ENCODE measurements at regions of chr18 and their contacts with region 1.

Region 1: GRCh38 chr18:23828426-23828825 is 139.2 kb downstream of the LAMA3 start:
- DNase-seq: peak; percentile 84
- H3K4me3 Mint-ChIP-seq: peak overlapping the region; percentile 48
- H3K27ac Mint-ChIP-seq: peak overlapping the region; percentile 90
- H3K4me1 Mint-ChIP-seq: peaks cover 45% of the 10 kb centered on the region
- H3K27me3 Mint-ChIP-seq: no peaks in the 10 kb centered on the region
- CTCF ChIP-seq: no peak

Region 2: DNA sequence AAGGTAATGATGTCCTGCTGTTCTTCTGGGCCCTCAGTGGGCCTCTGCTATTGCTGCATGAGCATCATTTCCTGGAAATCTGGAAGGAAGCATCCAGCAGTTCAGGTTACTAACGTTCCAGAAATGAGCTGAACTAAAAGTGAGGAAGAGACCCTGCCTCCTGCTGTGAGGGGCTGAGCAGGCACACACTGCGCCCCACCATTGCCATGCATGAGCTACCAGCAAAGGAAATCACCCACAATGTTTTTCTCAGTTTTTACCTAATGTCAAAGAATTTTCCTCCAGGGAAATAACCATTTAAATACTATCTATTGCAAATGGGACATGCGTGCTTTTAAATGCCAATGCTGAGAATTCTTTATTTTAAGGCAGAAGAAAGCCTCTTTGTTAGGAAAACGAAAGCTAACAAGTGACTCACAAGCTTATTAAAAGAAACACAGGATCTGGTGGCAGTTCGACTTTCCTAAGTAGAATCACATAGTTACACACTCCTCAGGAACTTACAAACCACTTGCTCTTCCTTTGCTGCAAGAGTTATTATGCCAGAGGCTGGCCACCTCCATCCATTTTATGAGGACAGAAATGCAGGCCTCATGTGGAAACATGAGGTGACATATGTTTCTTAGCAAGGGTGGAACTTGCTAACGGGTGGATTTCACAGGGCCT is 33.5 kb after region 1 on chr18:
- CTCF ChIA-PET with region 1: interaction called, 3 read pairs
- POLR2A ChIA-PET with region 1: interaction called, 18 read pairs
- intact Hi-C with region 1: no loop called
- DNase-seq: no peak
- H3K4me3 Mint-ChIP-seq: no peak overlapping the region
- H3K27ac Mint-ChIP-seq: no peak overlapping the region
- H3K4me1 Mint-ChIP-seq: peaks cover 24% of the 10 kb centered on the region
- H3K27me3 Mint-ChIP-seq: no peaks in the 10 kb centered on the region
- CTCF ChIP-seq: no peak

Region 3: DNA sequence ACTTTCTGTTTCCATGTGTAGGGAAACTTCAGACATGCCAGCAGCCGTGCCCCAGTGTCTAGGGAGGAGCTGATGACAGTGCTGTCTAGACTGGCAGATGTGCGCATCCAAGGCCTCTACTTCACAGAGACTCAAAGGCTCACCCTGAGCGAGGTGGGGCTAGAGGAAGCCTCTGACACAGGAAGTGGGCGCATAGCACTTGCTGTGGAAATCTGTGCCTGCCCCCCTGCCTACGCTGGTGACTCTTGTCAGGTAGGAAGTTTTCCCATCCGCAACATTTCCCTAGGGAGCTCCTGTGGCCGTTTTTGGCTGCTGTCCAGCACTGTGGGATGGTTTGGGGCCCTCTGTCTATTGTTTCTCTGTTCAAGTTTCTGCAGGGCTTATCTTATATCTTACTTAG is 43.0 kb after region 1 on chr18:
- CTCF ChIA-PET with region 1: interaction called, 4 read pairs
- POLR2A ChIA-PET with region 1: interaction called, 170 read pairs
- intact Hi-C with region 1: loop called (anchors 2 kb)
- DNase-seq: peak; percentile 82
- H3K4me3 Mint-ChIP-seq: peak overlapping the region; percentile 90
- H3K27ac Mint-ChIP-seq: peak overlapping the region; percentile 98
- H3K4me1 Mint-ChIP-seq: peaks cover 33% of the 10 kb centered on the region
- H3K27me3 Mint-ChIP-seq: no peaks in the 10 kb centered on the region
- CTCF ChIP-seq: no peak

Region 4: DNA sequence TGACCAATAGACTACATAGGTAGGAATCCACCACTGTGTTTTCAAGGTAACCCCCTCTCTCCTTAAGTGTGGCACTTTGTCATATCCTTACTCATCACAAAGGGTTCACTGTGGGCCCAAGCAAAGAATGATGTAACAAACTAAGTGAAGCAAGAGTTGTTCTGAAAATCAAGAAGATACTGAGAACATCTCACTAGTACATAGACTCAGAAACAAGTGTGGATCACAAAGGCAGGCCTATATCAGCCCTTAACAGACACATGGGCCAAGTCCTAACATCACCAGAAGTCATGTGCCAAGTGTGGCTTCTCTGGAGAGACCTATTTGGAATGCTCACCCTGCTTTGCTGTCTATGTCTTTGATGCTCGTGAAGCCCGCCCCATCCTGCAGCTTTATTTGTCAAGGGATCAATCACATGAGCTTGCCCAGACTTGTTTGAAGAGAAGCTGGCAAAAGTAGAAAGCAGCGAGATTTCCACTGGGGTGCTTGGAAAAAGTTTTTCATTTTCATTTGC is 54.9 kb after region 1 on chr18:
- CTCF ChIA-PET with region 1: interaction called, 6 read pairs
- POLR2A ChIA-PET with region 1: interaction called, 110 read pairs
- intact Hi-C with region 1: no loop called
- DNase-seq: peak; percentile 80
- H3K4me3 Mint-ChIP-seq: peak overlapping the region; percentile 34
- H3K27ac Mint-ChIP-seq: peak overlapping the region; percentile 86
- H3K4me1 Mint-ChIP-seq: peaks cover 60% of the 10 kb centered on the region
- H3K27me3 Mint-ChIP-seq: no peaks in the 10 kb centered on the region
- CTCF ChIP-seq: no peak

Region 5: DNA sequence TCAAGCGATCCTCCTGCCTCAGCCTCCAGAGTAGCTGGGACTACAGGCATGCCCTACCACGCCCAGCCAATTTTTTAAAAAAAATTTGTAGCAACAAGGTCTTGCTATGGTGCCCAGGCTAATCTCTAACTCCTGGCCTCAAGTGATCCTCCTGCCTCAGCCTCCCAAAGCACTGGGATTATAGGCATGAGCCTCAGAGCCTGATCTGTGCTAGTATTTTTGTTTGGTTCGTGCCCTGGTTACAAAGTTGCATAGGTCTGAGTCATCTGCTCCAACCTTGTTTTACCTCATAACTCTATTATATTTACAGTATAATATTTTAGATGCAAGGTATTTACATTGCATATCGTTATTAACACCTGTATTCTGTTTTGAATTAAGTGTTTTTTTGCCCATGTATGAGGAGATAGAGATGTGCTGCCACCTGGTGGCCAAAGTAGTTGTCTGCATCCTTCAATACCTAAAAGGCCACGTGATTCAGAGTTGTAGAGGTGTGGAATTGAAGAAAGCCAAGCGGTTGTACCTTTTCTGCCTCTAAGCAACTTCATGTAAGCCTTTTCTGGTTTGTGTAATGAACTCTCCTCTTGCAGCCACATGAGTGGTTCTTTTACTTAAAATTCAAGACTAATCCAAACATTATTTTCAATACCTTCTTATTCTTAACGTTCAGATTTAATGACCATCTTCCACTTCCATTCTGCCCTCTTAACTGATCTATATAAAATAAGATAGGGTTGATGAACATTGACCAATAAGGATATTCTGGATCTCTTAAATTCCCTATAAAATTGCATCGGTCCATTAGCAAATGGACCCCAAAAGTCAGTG is 290.5 kb after region 1 on chr18:
- CTCF ChIA-PET with region 1: no interaction called
- POLR2A ChIA-PET with region 1: no interaction called
- intact Hi-C with region 1: loop called (anchors 5 kb)
- DNase-seq: peak; percentile 86
- H3K4me3 Mint-ChIP-seq: no peak overlapping the region
- H3K27ac Mint-ChIP-seq: no peak overlapping the region
- H3K4me1 Mint-ChIP-seq: peaks cover under 1% of the 10 kb centered on the region
- H3K27me3 Mint-ChIP-seq: no peaks in the 10 kb centered on the region
- CTCF ChIP-seq: peak; percentile 75